ENCODE measurements at regions of chr14 and their contacts with region 1.

Region 1: DNA sequence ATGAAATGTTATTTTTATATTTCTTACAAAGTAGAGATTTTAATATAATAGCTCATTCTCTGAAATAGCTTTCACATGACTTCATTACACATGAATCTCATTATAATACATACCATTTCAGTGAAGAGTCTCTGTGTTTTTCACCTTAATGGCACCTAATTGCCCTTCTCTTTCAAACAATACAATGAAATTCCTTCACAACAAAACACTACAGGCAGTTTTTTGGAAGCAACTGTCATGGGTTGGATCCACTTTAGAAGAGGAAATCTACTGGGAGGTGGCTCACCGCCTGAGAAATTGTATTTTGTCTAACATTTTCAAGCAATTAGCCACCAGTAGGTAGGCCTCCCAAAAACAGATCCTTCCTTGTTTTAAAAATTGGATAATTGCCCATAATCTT is 40.3 kb upstream of the RGS6 start:
- DNase-seq: no peak
- H3K4me3 ChIP-seq: no peak overlapping the region
- H3K27ac ChIP-seq: no peak overlapping the region
- H3K4me1 ChIP-seq: no peaks in the 10 kb centered on the region
- CTCF ChIP-seq: no peak

Region 2: DNA sequence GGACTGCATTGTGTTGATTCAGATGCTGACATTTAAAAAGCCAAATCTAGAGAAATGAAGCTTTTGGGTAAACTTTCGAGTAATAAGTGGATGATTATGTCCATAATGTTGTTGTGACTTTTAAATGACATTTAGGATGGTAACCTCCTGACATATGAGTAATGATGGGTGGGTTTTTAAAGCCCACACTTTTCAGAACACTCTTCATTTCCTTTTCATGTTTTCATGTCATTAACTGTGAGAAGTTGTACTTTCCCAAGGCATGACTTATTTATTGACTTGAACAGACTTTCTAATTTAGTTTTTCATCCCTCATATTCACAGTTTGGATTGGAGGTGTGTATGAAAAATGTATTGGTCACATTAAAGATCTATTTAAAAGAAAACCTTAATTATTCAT is 75.7 kb after region 1 on chr14:
- CTCF ChIA-PET with region 1: no interaction called
- POLR2A ChIA-PET with region 1: no interaction called
- intact Hi-C with region 1: no loop called
- DNase-seq: no peak
- H3K4me3 ChIP-seq: no peak overlapping the region
- H3K27ac ChIP-seq: no peak overlapping the region
- H3K4me1 ChIP-seq: no peaks in the 10 kb centered on the region
- CTCF ChIP-seq: no peak

Region 3: DNA sequence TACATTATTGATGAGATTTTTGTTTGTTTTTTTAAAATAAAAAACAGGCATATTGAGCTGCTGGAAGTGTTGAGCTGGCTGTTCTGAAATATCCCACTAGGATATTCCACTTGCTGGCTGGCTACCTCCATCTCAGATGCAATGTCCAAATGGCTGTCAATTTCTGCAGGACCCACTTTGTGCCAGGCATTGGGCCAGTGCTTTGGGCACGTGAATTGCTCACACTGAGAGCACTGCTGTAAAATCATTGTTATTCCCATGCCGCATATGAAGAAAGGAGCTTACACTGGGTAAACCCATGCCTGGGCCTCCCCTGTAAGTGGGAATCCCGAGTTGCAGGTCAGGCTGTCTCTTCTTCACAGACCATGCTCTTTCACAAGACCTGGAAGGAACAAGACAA is 97.0 kb after region 1 on chr14:
- CTCF ChIA-PET with region 1: no interaction called
- POLR2A ChIA-PET with region 1: interaction called, 10 read pairs
- intact Hi-C with region 1: no loop called
- DNase-seq: no peak
- H3K4me3 ChIP-seq: no peak overlapping the region
- H3K27ac ChIP-seq: no peak overlapping the region
- H3K4me1 ChIP-seq: no peaks in the 10 kb centered on the region
- CTCF ChIP-seq: no peak